Sigmoid colon (tissue), 7 donors: ENCODE measurements at regions of chr15 and their contacts with region 1.

Region 1: GRCh38 chr15:63553388-63553791 is 43.8 kb upstream of the FBXL22 start:
- DNase-seq: no peak
- H3K4me3 ChIP-seq: peak overlapping the region in 1 of 4 donors; percentile 20
- H3K27ac ChIP-seq: peak overlapping the region; percentile 59 to 80 (median 72)
- H3K4me1 ChIP-seq: peaks cover 0 to 40% (median 36%) of the 10 kb centered on the region in 4 donors
- H3K27me3 ChIP-seq: no peaks in the 10 kb centered on the region
- CTCF ChIP-seq: no peak
- EP300 ChIP-seq: no peak
- POLR2A ChIP-seq: no peak

Region 2: GRCh38 chr15:63504979-63505841 is 48.2 kb before region 1 on chr15:
- intact Hi-C with region 1: loop called (anchors 5 kb)
- DNase-seq: peak; percentile 82
- H3K4me3 ChIP-seq: peak overlapping the region; percentile 75 to 87 (median 80)
- H3K27ac ChIP-seq: peak overlapping the region; percentile 94 to 99 (median 98)
- H3K4me1 ChIP-seq: peaks cover 5 to 79% (median 68%) of the 10 kb centered on the region in 4 donors
- H3K27me3 ChIP-seq: no peaks in the 10 kb centered on the region
- CTCF ChIP-seq: peak in 3 of 4 experiments; percentile 24 to 53 (median 50)
- EP300 ChIP-seq: no peak
- POLR2A ChIP-seq: no peak

Region 3: GRCh38 chr15:63531586-63531985 is 21.8 kb before region 1 on chr15:
- intact Hi-C with region 1: no loop called
- DNase-seq: no peak
- H3K4me3 ChIP-seq: no peak overlapping the region
- H3K27ac ChIP-seq: no peak overlapping the region
- H3K4me1 ChIP-seq: peaks cover 0 to 54% (median 33%) of the 10 kb centered on the region in 4 donors
- H3K27me3 ChIP-seq: no peaks in the 10 kb centered on the region
- CTCF ChIP-seq: no peak
- EP300 ChIP-seq: no peak
- POLR2A ChIP-seq: no peak

Region 4: GRCh38 chr15:63593705-63594671 is 40.6 kb after region 1 on chr15:
- intact Hi-C with region 1: loop called (anchors 5 kb)
- DNase-seq: no peak
- H3K4me3 ChIP-seq: no peak overlapping the region
- H3K27ac ChIP-seq: peak overlapping the region; percentile 87 to 95 (median 92)
- H3K4me1 ChIP-seq: peaks cover 0 to 48% (median 29%) of the 10 kb centered on the region in 4 donors
- H3K27me3 ChIP-seq: no peaks in the 10 kb centered on the region
- CTCF ChIP-seq: no peak
- EP300 ChIP-seq: no peak
- POLR2A ChIP-seq: no peak